Mammary epithelial cell (primary cell): ENCODE measurements at regions of chr21 and their contacts with region 1.

Region 1: GRCh38 chr21:27700974-27701614 is 734.2 kb upstream of the ADAMTS5 start:
- DNase-seq: peak; percentile 77
- H3K4me3 ChIP-seq: no peak overlapping the region
- H3K27ac ChIP-seq: no peak overlapping the region
- H3K4me1 ChIP-seq: no peaks in the 10 kb centered on the region
- H3K27me3 ChIP-seq: no peaks in the 10 kb centered on the region
- CTCF ChIP-seq: peak; percentile 76 to 92

Region 2: DNA sequence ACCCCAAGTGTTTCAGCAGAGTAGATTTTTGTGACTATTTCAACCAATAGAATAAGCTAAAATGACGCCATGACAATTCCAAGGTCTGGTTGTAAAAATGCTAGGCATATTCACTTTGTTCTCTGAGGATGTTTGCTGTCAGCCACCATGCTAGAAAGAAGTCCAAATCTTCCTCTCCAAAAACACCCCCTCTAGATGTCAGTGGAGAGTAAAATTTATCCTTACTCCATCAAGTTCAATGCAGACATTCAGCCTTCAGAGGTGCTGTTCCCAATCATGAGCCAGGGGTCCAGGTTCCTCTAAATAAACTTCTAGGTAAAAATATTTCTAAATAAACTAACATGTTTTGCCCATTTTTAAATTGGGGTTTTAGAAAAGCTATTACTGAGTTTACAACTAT is 338.8 kb before region 1 on chr21:
- CTCF ChIA-PET with region 1: no interaction called
- dilution Hi-C with region 1: no loop called
- in situ Hi-C with region 1: loop called in 1 of 2 experiments (anchors 25 kb)
- intact Hi-C with region 1: loop called (anchors 1 kb)
- DNase-seq: peak; percentile 11
- H3K4me3 ChIP-seq: no peak overlapping the region
- H3K27ac ChIP-seq: no peak overlapping the region
- H3K4me1 ChIP-seq: peaks cover 9% of the 10 kb centered on the region
- H3K27me3 ChIP-seq: no peaks in the 10 kb centered on the region
- CTCF ChIP-seq: peak; percentile 30 to 44

Region 3: GRCh38 chr21:27476696-27477095 is 224.4 kb before region 1 on chr21:
- CTCF ChIA-PET with region 1: no interaction called
- dilution Hi-C with region 1: no loop called
- in situ Hi-C with region 1: no loop called
- intact Hi-C with region 1: loop called (anchors 10 kb)
- DNase-seq: no peak
- H3K4me3 ChIP-seq: no peak overlapping the region
- H3K27ac ChIP-seq: no peak overlapping the region
- H3K4me1 ChIP-seq: peaks cover 7% of the 10 kb centered on the region
- H3K27me3 ChIP-seq: peaks cover 5% of the 10 kb centered on the region
- CTCF ChIP-seq: peak; percentile 39 to 59

Region 4: GRCh38 chr21:27564684-27565301 is 136.3 kb before region 1 on chr21:
- CTCF ChIA-PET with region 1: interaction called, 9 read pairs
- dilution Hi-C with region 1: no loop called
- in situ Hi-C with region 1: loop called in 1 of 2 experiments (anchors 10 kb)
- intact Hi-C with region 1: loop called (anchors 1 kb)
- DNase-seq: peak; percentile 42
- H3K4me3 ChIP-seq: no peak overlapping the region
- H3K27ac ChIP-seq: no peak overlapping the region
- H3K4me1 ChIP-seq: peaks cover 12% of the 10 kb centered on the region
- H3K27me3 ChIP-seq: no peaks in the 10 kb centered on the region
- CTCF ChIP-seq: peak; percentile 62 to 86

Region 5: DNA sequence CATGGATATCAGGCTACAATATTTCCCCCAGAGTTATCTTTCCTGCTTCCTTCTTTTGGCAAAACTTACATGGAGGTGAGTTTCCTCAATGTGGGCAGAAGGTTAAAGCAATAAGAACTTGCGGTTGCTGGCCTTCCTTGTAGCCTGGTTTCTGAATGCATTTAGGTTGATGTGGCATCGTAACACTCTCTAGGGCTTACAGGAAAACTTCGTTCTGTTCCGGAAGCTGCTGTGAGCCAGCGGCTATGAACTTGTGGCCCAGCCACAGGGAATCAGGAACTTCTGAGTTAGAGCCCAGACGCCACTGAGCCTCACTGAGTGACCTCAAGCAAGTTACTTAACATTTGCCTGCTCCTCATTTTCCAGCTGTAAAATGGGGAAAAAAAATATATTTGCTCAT is 110.8 kb before region 1 on chr21:
- CTCF ChIA-PET with region 1: no interaction called
- dilution Hi-C with region 1: no loop called
- in situ Hi-C with region 1: no loop called
- intact Hi-C with region 1: no loop called
- DNase-seq: no peak
- H3K4me3 ChIP-seq: no peak overlapping the region
- H3K27ac ChIP-seq: no peak overlapping the region
- H3K4me1 ChIP-seq: no peaks in the 10 kb centered on the region
- H3K27me3 ChIP-seq: no peaks in the 10 kb centered on the region
- CTCF ChIP-seq: no peak

Region 6: GRCh38 chr21:27802816-27803475 is 101.9 kb after region 1 on chr21:
- CTCF ChIA-PET with region 1: no interaction called
- dilution Hi-C with region 1: no loop called
- in situ Hi-C with region 1: no loop called
- intact Hi-C with region 1: loop called (anchors 1 kb)
- DNase-seq: peak; percentile 43
- H3K4me3 ChIP-seq: no peak overlapping the region
- H3K27ac ChIP-seq: no peak overlapping the region
- H3K4me1 ChIP-seq: no peaks in the 10 kb centered on the region
- H3K27me3 ChIP-seq: no peaks in the 10 kb centered on the region
- CTCF ChIP-seq: peak; percentile 72 to 80